Heart right ventricle (tissue), 16 donors: ENCODE measurements at regions of chr12 and their contacts with region 1.

Region 1: GRCh38 chr12:15590180-15590826 is 198.9 kb downstream of the EPS8 start:
- DNase-seq: peak in 1 of 2 donors; percentile 54
- ATAC-seq: peak; percentile 70 to 92 (median 82)
- H3K4me3 ChIP-seq: peak overlapping the region in 7 of 10 donors; percentile 1 to 45 (median 31)
- H3K27ac ChIP-seq: peak overlapping the region in 8 of 10 donors; percentile 19 to 64 (median 44)
- H3K4me1 ChIP-seq: peaks cover 0 to 11% (median 4%) of the 10 kb centered on the region in 9 donors
- H3K27me3 ChIP-seq: peaks cover 0 to 11% (median 0%) of the 10 kb centered on the region in 7 donors
- CTCF ChIP-seq: peak; percentile 77 to 97 (median 89)

Region 2: GRCh38 chr12:15629108-15629507 is 38.8 kb after region 1 on chr12:
- intact Hi-C with region 1: loop called in 2 of 10 experiments (anchors 2 to 5 kb)
- DNase-seq: peak; percentile 14 to 82
- ATAC-seq: peak; percentile 91 to 98 (median 97)
- H3K4me3 ChIP-seq: no peak overlapping the region
- H3K27ac ChIP-seq: peak overlapping the region in 9 of 10 donors; percentile 61 to 87 (median 81)
- H3K4me1 ChIP-seq: peaks cover 0 to 61% (median 37%) of the 10 kb centered on the region in 9 donors
- H3K27me3 ChIP-seq: no peaks in the 10 kb centered on the region
- CTCF ChIP-seq: no peak

Region 3: GRCh38 chr12:15772405-15773018 is 182.2 kb after region 1 on chr12:
- intact Hi-C with region 1: loop called in 1 of 10 experiments (anchors 10 kb)
- DNase-seq: no peak
- ATAC-seq: peak in 1 of 8 donors; percentile 26
- H3K4me3 ChIP-seq: no peak overlapping the region
- H3K27ac ChIP-seq: peak overlapping the region in 2 of 10 donors; percentile 20 to 51
- H3K4me1 ChIP-seq: peaks cover 0 to 60% (median 14%) of the 10 kb centered on the region in 9 donors
- H3K27me3 ChIP-seq: no peaks in the 10 kb centered on the region
- CTCF ChIP-seq: peak in 8 of 9 donors; percentile 8 to 63 (median 50)

Region 4: GRCh38 chr12:15856097-15856982 is 266.0 kb after region 1 on chr12:
- intact Hi-C with region 1: loop called (anchors 1 to 5 kb)
- DNase-seq: peak in 1 of 2 donors; percentile 62
- ATAC-seq: peak in 6 of 8 donors; percentile 57 to 77 (median 72)
- H3K4me3 ChIP-seq: no peak overlapping the region
- H3K27ac ChIP-seq: peak overlapping the region in 3 of 10 donors; percentile 1 to 48 (median 23)
- H3K4me1 ChIP-seq: peaks cover 0 to 3% (median 0%) of the 10 kb centered on the region in 9 donors
- H3K27me3 ChIP-seq: peaks cover 0 to 13% (median 5%) of the 10 kb centered on the region in 7 donors
- CTCF ChIP-seq: peak; percentile 64 to 96 (median 83)